ENCODE measurements at regions of chr6 and their contacts with region 1.

Region 1: DNA sequence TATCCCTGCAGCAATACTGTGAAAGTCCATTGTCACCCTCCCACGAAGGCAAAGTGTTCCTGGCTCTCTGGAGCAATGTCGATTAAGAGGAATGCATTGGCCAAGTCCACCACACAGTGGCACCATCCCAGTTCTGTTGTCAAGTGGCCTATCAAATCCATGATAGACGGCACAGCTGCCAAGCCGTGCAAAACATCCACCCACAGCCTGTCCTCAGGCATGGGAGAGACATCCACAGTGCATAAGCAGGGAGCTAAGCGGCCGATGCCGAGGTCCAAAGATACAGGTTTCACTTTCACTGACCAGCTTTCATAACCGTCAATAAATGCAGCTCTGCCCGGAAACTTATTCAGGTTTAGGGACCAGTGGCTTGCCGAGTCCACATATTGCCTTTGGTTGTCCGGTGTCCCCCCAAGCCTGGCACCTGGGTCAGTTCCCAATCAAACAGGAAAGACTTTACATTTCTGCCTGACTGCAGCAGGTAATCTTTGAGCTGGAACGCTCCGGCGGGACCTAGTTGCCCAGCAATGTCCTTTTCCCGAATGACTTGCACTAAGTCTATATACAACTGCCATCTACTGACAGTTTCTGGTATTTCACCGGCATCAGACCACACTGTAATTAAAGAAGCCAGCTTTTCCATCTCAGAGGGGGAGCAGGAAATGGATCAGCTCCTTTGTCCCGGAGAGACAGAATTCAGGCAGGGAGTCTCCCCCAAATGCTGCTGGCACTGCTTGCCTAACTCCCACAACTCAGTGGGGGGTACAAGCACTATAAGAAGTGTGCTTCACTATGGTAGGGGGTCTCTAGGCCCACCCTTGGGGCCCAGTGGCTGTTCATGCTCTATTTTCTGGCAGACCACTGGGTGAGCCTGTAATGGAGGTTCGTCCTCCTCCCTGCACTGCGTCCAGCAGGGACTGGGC is 6.3 kb downstream of the ZKSCAN3 start:
- DNase-seq: peak; percentile 61
- H3K4me3 Mint-ChIP-seq: peak overlapping the region; percentile 85
- H3K27ac Mint-ChIP-seq: no peak overlapping the region
- H3K4me1 Mint-ChIP-seq: peaks cover 18% of the 10 kb centered on the region
- H3K27me3 Mint-ChIP-seq: no peaks in the 10 kb centered on the region

Region 2: GRCh38 chr6:27809939-27810767 is 545.9 kb before region 1 on chr6:
- CTCF ChIA-PET with region 1: no interaction called
- POLR2A ChIA-PET with region 1: interaction called, 3 read pairs
- intact Hi-C with region 1: loop called (anchors 10 kb)
- DNase-seq: peak; percentile 82
- H3K4me3 Mint-ChIP-seq: peak overlapping the region; percentile 85
- H3K27ac Mint-ChIP-seq: peak overlapping the region; percentile 96
- H3K4me1 Mint-ChIP-seq: peaks cover 61% of the 10 kb centered on the region
- H3K27me3 Mint-ChIP-seq: peaks cover 4% of the 10 kb centered on the region

Region 3: GRCh38 chr6:28104392-28105244 is 251.4 kb before region 1 on chr6:
- CTCF ChIA-PET with region 1: interaction called, 13 read pairs
- POLR2A ChIA-PET with region 1: interaction called, 3 read pairs
- intact Hi-C with region 1: no loop called
- DNase-seq: peak; percentile 89
- H3K4me3 Mint-ChIP-seq: peak overlapping the region; percentile 80
- H3K27ac Mint-ChIP-seq: peak overlapping the region; percentile 88
- H3K4me1 Mint-ChIP-seq: peaks cover 4% of the 10 kb centered on the region
- H3K27me3 Mint-ChIP-seq: peaks cover 4% of the 10 kb centered on the region

Region 4: DNA sequence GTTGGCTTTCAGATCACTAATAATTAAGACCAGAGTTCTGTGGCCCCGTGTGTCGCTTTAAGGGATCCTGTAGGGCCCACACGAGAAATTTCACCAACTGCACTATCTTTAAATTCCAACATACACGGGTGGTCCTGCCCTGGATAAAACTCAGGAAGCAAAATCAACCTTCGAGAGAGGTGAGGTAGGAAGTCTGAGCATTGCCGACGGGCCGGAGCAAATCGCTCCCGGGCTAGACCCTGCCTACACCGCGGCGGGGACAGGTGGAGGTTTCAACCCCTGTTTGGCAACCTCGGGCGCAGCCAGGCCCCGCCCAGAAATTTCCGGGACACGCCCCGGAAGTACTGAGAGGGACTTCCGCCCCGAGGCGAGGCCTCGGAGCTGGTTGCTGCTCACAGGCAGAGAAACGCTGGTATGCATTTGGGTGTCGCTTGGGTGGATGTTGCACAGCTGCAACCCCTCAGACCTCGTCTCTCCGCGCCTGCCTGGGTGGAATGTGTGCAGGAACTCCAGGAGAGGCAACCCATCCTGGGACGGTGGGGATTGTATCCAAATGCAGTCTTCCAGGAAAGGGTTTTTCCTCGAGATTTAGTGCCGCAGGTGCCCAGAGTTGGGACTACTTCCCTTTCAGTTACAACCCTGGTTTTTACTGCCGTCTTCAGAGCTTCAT is 194.5 kb before region 1 on chr6:
- CTCF ChIA-PET with region 1: interaction called, 10 read pairs
- POLR2A ChIA-PET with region 1: no interaction called
- intact Hi-C with region 1: no loop called
- DNase-seq: peak; percentile 89
- H3K4me3 Mint-ChIP-seq: peak overlapping the region; percentile 61
- H3K27ac Mint-ChIP-seq: peak overlapping the region; percentile 42
- H3K4me1 Mint-ChIP-seq: peaks cover 14% of the 10 kb centered on the region
- H3K27me3 Mint-ChIP-seq: no peaks in the 10 kb centered on the region

Region 5: GRCh38 chr6:28252009-28252975 is 103.7 kb before region 1 on chr6 and contains the start of gene ZKSCAN4:
- CTCF ChIA-PET with region 1: interaction called, 10 read pairs
- POLR2A ChIA-PET with region 1: no interaction called
- intact Hi-C with region 1: no loop called
- DNase-seq: peak; percentile 84
- H3K4me3 Mint-ChIP-seq: peak within 1 kb of the TSS; percentile 98
- H3K27ac Mint-ChIP-seq: peak within 1 kb of the TSS; percentile 73
- H3K4me1 Mint-ChIP-seq: peaks cover 17% of the 10 kb centered on the region
- H3K27me3 Mint-ChIP-seq: no peaks in the 10 kb centered on the region
- total RNA-seq, gene ZKSCAN4: 3.7 to 3.8 TPM

Region 6: DNA sequence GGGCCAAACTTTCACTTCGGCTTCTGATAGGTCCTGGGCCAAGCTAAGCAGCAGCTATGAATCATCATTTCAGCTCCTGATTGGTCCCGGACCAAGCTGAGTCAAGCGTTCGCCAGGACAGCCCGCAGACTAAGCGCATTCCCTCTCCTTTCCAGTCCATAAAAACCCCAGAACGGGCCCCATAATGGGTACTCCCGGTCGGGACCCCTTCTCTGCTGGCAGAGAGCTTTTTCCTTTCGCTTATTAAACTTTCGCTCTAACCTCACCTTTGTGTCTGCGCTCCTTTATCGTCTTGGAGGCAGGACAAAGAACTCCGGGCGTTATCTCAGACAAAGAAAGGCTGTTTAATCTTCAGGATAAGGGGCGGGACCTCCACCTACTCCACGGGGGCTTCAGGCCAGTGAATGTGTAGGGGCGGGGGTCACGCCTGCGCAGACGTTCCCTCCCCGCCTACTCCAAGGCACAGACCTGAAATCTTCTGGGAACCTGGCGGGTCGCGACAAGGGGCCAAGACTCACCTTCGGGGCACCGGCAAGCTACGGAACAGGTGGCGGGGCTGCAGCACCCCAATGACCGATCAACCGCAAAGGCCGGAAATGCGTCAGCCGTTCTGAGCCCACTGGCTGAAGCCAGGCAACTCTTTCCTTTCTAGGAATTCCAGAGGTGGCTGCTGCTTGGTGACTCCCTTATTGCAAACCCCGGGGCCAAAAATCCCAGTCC is 20.3 kb before region 1 on chr6 and contains the start of gene ZSCAN31:
- CTCF ChIA-PET with region 1: interaction called, 15 read pairs
- POLR2A ChIA-PET with region 1: no interaction called
- intact Hi-C with region 1: no loop called
- DNase-seq: peak; percentile 88
- H3K4me3 Mint-ChIP-seq: no peak within 1 kb of the TSS
- H3K27ac Mint-ChIP-seq: no peak within 1 kb of the TSS
- H3K4me1 Mint-ChIP-seq: no peaks in the 10 kb centered on the region
- H3K27me3 Mint-ChIP-seq: no peaks in the 10 kb centered on the region
- total RNA-seq, gene ZSCAN31: 0.77 to 1.6 TPM